ENCODE measurements at regions of chr1 and their contacts with region 1.

Region 1: DNA sequence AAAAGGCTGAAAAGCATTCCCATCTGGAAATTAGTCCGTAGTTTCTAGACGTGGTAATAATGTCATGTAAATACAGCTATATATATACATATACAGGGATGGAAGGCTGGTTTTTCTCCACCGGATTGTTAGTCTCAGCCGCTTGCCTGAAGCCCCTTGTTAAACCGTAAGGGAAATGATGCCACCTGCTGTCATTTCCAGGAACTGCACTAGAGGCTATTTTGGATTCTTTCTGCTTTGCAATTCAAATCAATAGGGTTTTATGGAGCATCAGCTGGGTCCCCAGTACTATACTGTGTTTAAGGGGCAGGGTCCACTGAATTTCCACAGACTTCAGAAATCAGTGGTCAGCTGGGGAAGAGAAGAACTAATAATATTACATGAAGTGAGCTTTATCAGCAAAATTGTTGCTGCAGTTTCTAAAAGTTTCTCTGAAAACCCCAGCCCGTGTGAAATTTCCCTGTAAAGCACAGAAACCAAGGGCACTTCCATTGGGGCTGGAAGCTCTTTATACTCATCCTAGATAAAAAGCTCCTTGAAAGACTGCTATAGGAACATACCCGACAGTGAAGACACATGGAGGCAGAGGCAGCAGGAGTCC is 33.8 kb upstream of the MPZL1 start:
- DNase-seq: peak; percentile 86
- H3K4me3 Mint-ChIP-seq: no peak overlapping the region
- H3K27ac Mint-ChIP-seq: peak overlapping the region; percentile 1
- H3K4me1 Mint-ChIP-seq: peaks cover 7% of the 10 kb centered on the region
- H3K27me3 Mint-ChIP-seq: no peaks in the 10 kb centered on the region

Region 2: DNA sequence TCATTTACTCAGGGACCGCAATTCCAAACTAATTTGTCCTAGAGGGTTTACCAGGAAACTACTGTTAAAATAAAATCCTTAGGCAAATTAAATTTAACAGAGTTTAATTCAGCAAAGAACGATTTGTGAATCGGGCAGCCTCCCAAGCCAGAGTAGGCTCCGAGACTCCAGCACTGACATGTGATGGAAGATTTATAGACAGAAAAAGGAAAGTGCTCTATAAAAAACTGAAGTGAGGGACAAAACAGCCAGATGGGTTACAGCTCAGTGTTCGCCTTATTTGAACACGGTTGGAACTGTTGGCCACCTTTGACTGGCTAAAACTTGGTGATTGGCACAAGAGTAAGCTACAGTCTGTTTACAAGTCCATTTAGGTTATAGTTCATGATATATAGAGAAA is 93.2 kb before region 1 on chr1:
- CTCF ChIA-PET with region 1: interaction called, 100 read pairs
- DNase-seq: no peak
- H3K4me3 Mint-ChIP-seq: no peak overlapping the region
- H3K27ac Mint-ChIP-seq: no peak overlapping the region
- H3K4me1 Mint-ChIP-seq: peaks cover 15% of the 10 kb centered on the region
- H3K27me3 Mint-ChIP-seq: peaks cover 10% of the 10 kb centered on the region

Region 3: GRCh38 chr1:167627865-167628641 is 60.0 kb before region 1 on chr1:
- CTCF ChIA-PET with region 1: interaction called, 27 read pairs
- DNase-seq: peak; percentile 89
- H3K4me3 Mint-ChIP-seq: peak overlapping the region; percentile 95
- H3K27ac Mint-ChIP-seq: peak overlapping the region; percentile 98
- H3K4me1 Mint-ChIP-seq: peaks cover 66% of the 10 kb centered on the region
- H3K27me3 Mint-ChIP-seq: no peaks in the 10 kb centered on the region

Region 4: GRCh38 chr1:167669209-167670124 is 18.6 kb before region 1 on chr1:
- CTCF ChIA-PET with region 1: interaction called, 15 read pairs
- DNase-seq: no peak
- H3K4me3 Mint-ChIP-seq: no peak overlapping the region
- H3K27ac Mint-ChIP-seq: no peak overlapping the region
- H3K4me1 Mint-ChIP-seq: peaks cover 41% of the 10 kb centered on the region
- H3K27me3 Mint-ChIP-seq: no peaks in the 10 kb centered on the region

Region 5: DNA sequence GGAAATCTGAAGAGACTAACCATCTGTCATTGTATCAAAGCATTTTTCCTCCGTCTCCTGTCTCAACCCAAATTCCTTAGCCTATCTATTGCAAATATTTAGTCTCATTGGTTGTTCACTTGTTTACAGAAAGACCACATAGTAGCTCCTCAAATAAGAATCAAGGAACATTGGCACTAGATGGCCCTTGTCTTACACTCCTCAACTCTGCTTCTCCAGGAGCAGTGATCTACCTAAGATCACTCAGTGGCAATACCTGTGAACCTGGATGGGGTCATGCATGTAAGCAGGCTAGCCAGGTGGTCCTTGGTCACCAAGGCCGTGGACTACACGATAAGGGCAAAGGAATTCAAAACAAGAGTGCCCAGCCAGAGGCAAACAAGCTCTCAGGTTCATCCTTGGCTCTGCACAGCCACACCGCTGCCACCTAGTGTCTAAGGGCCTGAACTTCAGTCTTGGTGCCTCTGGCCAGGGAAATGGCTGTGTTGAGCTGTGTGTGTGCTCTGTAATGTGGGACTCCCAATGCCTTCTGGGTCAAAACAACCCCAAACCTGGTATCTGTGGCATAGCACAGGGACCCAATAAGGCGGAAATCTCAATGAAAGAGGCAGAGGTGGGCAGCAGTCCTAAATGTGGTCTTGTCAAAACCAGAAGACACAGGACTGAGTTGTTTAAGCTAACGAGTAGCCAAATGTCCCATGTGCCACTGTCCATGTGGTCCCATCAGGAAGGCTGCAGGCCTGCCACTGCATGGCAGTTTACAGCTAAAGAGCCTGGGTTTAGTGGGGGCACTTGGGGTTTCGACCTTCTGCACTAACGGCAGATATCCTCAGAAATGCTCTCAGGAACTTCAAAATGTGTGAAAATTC is 394.2 kb after region 1 on chr1:
- CTCF ChIA-PET with region 1: interaction called, 10 read pairs
- DNase-seq: peak; percentile 82
- H3K4me3 Mint-ChIP-seq: no peak overlapping the region
- H3K27ac Mint-ChIP-seq: no peak overlapping the region
- H3K4me1 Mint-ChIP-seq: peaks cover 2% of the 10 kb centered on the region
- H3K27me3 Mint-ChIP-seq: no peaks in the 10 kb centered on the region

Measured in activated naive CD4-positive, alpha-beta T cell treated with anti-CD3 and anti-CD28 coated beads, Interleukin-2, amount 10 ng/mL, durations not matched to agents 7 days and 5 days (primary cell).